HepG2 (cell line): ENCODE measurements at regions of chr5 and their contacts with region 1.

Region 1: DNA sequence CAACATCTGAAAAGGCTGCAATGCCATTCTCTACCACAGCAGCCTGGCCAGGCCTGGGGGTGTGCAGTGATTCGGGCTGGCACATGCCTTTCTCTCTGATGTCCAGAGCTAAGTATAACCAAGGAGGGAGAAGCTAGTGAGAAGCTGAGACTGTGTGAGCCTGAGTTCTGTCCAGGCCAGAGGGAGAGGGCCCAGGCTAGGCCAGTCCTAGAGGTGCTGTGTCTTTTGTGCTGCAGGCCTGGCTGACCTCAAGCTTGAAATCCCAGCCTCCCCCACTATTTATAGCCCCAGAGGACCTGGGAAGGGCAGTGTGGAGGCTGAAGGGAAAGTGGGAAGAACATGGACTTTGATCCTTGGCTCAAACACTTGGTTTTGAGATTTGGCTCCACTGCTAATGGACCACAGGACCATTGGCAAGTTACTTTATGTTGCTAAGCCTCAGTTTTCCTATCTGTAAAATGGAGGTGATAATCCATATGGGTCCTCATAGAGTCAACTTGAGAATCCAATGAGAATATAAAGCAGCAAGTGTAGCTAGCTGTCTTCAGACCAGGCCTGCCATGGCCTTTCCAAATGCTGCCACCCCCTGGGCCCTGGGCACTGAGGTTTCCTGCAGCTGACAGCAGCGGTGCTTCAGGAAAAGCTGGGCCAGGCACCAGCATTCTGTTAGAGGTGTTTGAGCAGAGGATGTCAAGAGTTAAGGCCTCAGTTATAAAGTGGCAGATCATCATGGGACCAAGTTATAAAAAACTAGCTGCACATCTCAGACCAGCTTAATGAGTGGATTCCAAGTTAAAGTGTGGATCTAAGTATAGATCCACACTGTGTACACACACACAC is 21.1 kb downstream of the BNIP1 start:
- DNase-seq: no peak
- ATAC-seq: peak; percentile 27; the same call in 2 of the 3 replicates
- H3K4me3 ChIP-seq: no peak overlapping the region
- H3K27ac ChIP-seq: no peak overlapping the region
- H3K4me1 ChIP-seq: 0 out of 2 replicates have a peak, but pooled peaks cover 7% of the 10 kb centered on the region
- H3K27me3 ChIP-seq: peaks cover 2 to 11% of the 10 kb centered on the region in 2 experiments; a peak in 3 of 5 replicates
- CTCF ChIP-seq: no peak
- EP300 ChIP-seq: no peak
- POLR2A ChIP-seq: no peak
- RAD21 ChIP-seq: no peak

Region 2: GRCh38 chr5:173204185-173204979 is 39.0 kb after region 1 on chr5:
- CTCF ChIA-PET with region 1: interaction called, 13 read pairs
- POLR2A ChIA-PET with region 1: no interaction called
- in situ Hi-C with region 1: no loop called
- intact Hi-C with region 1: loop called (anchors 1 kb)
- DNase-seq: peak; percentile 42
- ATAC-seq: no peak
- H3K4me3 ChIP-seq: no peak overlapping the region
- H3K27ac ChIP-seq: no peak overlapping the region
- H3K4me1 ChIP-seq: no peaks in the 10 kb centered on the region
- H3K27me3 ChIP-seq: peaks cover 1 to 21% of the 10 kb centered on the region in 2 experiments
- CTCF ChIP-seq: peak; percentile 67
- EP300 ChIP-seq: no peak
- POLR2A ChIP-seq: no peak
- RAD21 ChIP-seq: no peak

Region 3: GRCh38 chr5:173283318-173284288 is 118.2 kb after region 1 on chr5:
- CTCF ChIA-PET with region 1: interaction called, 14 read pairs
- POLR2A ChIA-PET with region 1: no interaction called
- in situ Hi-C with region 1: loop called (anchors 5 kb)
- intact Hi-C with region 1: loop called (anchors 1 kb)
- DNase-seq: peak; percentile 68
- ATAC-seq: peak; percentile 98
- H3K4me3 ChIP-seq: peak overlapping the region in 1 of 3 experiments; percentile 45; a peak in 2 of 6 replicates
- H3K27ac ChIP-seq: no peak overlapping the region
- H3K4me1 ChIP-seq: peaks cover 16% of the 10 kb centered on the region
- H3K27me3 ChIP-seq: peaks cover 0 to 17% of the 10 kb centered on the region in 2 experiments; a peak in 2 of 5 replicates
- CTCF ChIP-seq: peak; percentile 93
- EP300 ChIP-seq: peak in 1 of 2 experiments; percentile 25; a peak in 1 of 4 replicates
- POLR2A ChIP-seq: no peak
- RAD21 ChIP-seq: peak; percentile 92